ENCODE measurements at regions of chr7 and their contacts with region 1.

Region 1: GRCh38 chr7:23712368-23713284 is 2.6 kb downstream of the STK31 start:
- DNase-seq: no peak
- ATAC-seq: peak; percentile 42

Region 2: DNA sequence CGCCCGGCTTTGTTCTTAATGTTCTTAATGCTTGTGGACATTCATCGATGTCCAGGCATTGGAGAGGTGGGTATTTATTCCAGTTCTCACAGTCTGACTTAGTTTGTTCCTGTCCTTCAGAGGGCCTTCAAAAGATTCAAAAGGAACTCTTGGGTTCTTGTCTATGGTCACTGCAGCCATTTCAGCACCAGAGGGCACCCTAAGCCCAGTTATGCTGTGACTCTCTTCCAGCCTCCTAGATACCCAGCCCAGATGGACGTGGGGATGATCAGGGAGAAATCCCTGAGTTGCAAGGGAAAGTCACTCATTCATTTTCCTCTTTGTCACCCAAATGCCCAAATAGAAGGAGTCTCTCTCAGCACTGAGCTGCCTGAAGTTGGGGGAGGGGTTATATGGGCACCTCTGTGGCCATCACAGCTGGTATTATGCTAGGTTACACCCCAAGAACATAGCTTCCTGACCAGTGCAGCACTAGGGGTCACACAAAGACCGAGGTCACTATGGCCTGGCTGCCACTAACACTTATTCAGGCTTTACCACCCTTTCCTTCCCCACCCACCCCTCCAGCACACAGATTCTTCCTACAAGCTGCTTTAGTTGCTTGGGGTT is 141.9 kb before region 1 on chr7:
- intact Hi-C with region 1: loop called (anchors 2 kb)
- DNase-seq: peak; percentile 73
- ATAC-seq: peak; percentile 95

Measured in left ventricle myocardium superior (tissue), 1 donor.